Vagina (tissue), 2 donors: ENCODE measurements at regions of chr2 and their contacts with region 1.

Region 1: GRCh38 chr2:20635675-20636584 is 15.0 kb downstream of the HS1BP3 start:
- DNase-seq: no peak
- H3K4me3 ChIP-seq: no peak overlapping the region
- H3K27ac ChIP-seq: peak overlapping the region; percentile 81
- H3K4me1 ChIP-seq: peaks cover 43% of the 10 kb centered on the region
- H3K27me3 ChIP-seq: no peaks in the 10 kb centered on the region
- CTCF ChIP-seq: peak; percentile 36 to 96 (median 69)
- POLR2A ChIP-seq: no peak

Region 2: GRCh38 chr2:20381444-20381843 is 254.5 kb before region 1 on chr2:
- intact Hi-C with region 1: loop called (anchors 5 kb)
- DNase-seq: no peak
- H3K4me3 ChIP-seq: no peak overlapping the region
- H3K27ac ChIP-seq: no peak overlapping the region
- H3K4me1 ChIP-seq: no peaks in the 10 kb centered on the region
- H3K27me3 ChIP-seq: no peaks in the 10 kb centered on the region
- CTCF ChIP-seq: no peak
- POLR2A ChIP-seq: no peak

Region 3: DNA sequence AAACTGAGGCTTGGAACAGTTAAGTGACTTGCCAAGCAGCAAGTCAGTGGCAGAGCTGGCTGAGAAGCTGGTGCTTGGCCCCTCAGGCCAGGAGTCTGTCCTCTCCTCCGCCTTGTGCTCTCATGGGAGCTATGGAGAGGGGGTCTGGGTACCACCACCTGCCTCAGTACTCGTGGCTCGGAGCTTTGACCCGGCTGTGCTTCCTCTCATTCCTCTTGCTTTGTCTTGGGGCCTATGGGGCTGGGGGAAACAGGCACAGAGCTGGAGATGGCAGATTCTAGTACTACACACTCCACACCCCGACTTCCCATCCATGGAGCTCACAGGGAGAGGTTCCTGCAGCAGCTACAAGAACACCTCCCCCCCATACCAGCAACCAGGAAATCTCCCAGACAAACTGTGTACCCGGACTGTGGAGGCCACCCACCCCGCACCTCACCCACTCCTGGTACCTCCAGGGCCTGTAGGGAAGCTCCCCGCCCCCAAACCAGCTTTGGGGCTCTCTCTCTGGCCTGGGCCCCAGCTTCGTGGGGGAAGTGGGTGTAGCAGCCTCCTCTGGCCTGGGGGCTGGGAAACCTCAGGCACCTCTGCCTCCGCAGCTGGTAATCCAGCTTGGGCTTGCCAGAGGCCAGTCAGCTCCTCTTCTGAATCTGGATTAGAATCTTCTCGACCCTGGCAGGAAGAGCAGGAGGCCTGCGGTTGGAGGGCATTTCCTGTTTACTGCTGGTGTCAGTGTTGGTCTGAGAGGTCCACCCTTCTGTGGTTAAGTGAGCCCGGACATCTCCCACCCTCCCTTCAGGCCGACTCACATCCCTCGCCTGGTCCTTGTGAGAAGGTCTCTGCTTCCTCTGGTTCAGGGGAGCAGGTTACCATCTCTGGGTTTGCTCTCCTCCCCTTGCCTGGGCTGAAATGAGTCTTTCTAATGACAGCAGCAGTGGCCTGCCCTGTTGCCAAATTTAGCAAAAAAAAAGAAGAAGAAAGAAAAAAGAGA is 211.3 kb before region 1 on chr2:
- intact Hi-C with region 1: loop called (anchors 5 kb)
- DNase-seq: peak; percentile 88 to 89
- H3K4me3 ChIP-seq: no peak overlapping the region
- H3K27ac ChIP-seq: peak overlapping the region; percentile 83
- H3K4me1 ChIP-seq: peaks cover 60% of the 10 kb centered on the region
- H3K27me3 ChIP-seq: no peaks in the 10 kb centered on the region
- CTCF ChIP-seq: no peak
- POLR2A ChIP-seq: no peak

Region 4: DNA sequence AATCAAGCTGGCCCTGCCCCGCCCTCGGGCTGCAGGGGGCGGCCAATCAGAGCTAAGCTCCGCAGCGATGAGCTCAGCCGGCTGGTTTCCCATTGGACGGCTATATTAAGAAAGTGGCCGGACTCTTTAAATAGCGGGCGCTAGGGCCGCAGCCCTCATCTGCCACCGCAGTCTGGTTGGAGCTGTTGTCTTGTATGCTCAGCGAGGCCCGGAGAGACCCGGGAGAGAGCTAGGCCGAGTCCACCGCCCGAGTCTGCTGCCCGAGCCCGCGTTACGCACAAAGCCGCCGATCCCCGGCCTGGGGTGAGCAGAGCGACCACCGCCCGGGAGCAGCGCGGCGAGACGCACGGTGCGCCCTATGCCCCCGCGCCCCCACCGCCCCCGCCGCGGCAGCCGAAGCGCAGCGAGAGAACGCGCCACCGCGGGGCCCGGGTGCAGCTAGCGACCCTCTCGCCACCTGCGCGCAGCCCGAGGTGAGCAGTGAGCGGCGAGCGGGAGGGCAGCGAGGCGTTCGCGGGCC is 189.0 kb before region 1 on chr2 and contains the start of gene RHOB:
- intact Hi-C with region 1: loop called (anchors 1 kb)
- DNase-seq: peak in 1 of 2 donors; percentile 99
- H3K4me3 ChIP-seq: peak within 1 kb of the TSS; percentile 91 to 96
- H3K27ac ChIP-seq: peak within 1 kb of the TSS; percentile 99
- H3K4me1 ChIP-seq: peaks cover 50% of the 10 kb centered on the region
- H3K27me3 ChIP-seq: no peaks in the 10 kb centered on the region
- CTCF ChIP-seq: peak in 1 of 3 experiments; percentile 22
- POLR2A ChIP-seq: peak; percentile 55 to 98
- total RNA-seq, gene RHOB: 1,771 TPM

Region 5: GRCh38 chr2:20578895-20579825 is 56.8 kb before region 1 on chr2:
- intact Hi-C with region 1: loop called (anchors 5 kb)
- DNase-seq: no peak
- H3K4me3 ChIP-seq: no peak overlapping the region
- H3K27ac ChIP-seq: peak overlapping the region; percentile 74
- H3K4me1 ChIP-seq: peaks cover 40% of the 10 kb centered on the region
- H3K27me3 ChIP-seq: no peaks in the 10 kb centered on the region
- CTCF ChIP-seq: no peak
- POLR2A ChIP-seq: no peak

Region 6: GRCh38 chr2:20617892-20618467 is 17.9 kb before region 1 on chr2:
- intact Hi-C with region 1: no loop called
- DNase-seq: peak in 1 of 2 donors; percentile 99
- H3K4me3 ChIP-seq: peak overlapping the region in 1 of 2 donors; percentile 17
- H3K27ac ChIP-seq: peak overlapping the region; percentile 97
- H3K4me1 ChIP-seq: peaks cover 86% of the 10 kb centered on the region
- H3K27me3 ChIP-seq: no peaks in the 10 kb centered on the region
- CTCF ChIP-seq: peak in 1 of 3 experiments; percentile 74
- POLR2A ChIP-seq: no peak

Region 7: GRCh38 chr2:20829861-20830260 is 193.9 kb after region 1 on chr2:
- intact Hi-C with region 1: no loop called
- DNase-seq: no peak
- H3K4me3 ChIP-seq: no peak overlapping the region
- H3K27ac ChIP-seq: no peak overlapping the region
- H3K4me1 ChIP-seq: no peaks in the 10 kb centered on the region
- H3K27me3 ChIP-seq: no peaks in the 10 kb centered on the region
- CTCF ChIP-seq: no peak
- POLR2A ChIP-seq: no peak